Esophagus squamous epithelium (tissue), 5 donors: ENCODE measurements at regions of chr3 and their contacts with region 1.

Region 1: GRCh38 chr3:100254168-100254777 is 6.5 kb upstream of the TBC1D23 start:
- DNase-seq: no peak
- H3K4me3 ChIP-seq: no peak overlapping the region
- H3K27ac ChIP-seq: peak overlapping the region in 1 of 4 donors; percentile 22
- H3K4me1 ChIP-seq: peaks cover 0 to 11% (median 3%) of the 10 kb centered on the region in 3 donors
- H3K27me3 ChIP-seq: no peaks in the 10 kb centered on the region
- CTCF ChIP-seq: peak; percentile 44 to 72 (median 67)
- POLR2A ChIP-seq: no peak

Region 2: DNA sequence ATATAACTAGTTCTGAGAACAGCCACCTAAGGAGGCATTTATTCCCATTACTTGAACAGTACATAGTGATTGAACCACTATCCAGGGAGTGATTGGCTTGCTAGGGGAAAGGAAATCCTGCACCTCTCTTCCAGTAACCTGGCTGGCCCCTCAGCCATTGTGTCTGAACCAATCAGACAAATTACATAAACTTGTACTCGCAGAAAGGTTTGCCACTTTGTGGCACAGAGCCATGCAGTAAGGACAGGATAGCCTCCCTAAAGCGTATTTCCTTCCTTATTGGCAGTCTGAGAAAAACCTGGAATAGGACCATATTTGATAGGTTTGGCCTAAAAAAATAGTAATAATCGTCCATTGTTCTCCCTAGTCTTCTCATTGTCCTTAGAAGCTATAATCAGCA is 417.6 kb before region 1 on chr3:
- intact Hi-C with region 1: loop called (anchors 5 kb)
- DNase-seq: no peak
- H3K4me3 ChIP-seq: no peak overlapping the region
- H3K27ac ChIP-seq: no peak overlapping the region
- H3K4me1 ChIP-seq: peaks cover 0 to 34% (median 0%) of the 10 kb centered on the region in 3 donors
- H3K27me3 ChIP-seq: no peaks in the 10 kb centered on the region
- CTCF ChIP-seq: no peak
- POLR2A ChIP-seq: no peak

Region 3: DNA sequence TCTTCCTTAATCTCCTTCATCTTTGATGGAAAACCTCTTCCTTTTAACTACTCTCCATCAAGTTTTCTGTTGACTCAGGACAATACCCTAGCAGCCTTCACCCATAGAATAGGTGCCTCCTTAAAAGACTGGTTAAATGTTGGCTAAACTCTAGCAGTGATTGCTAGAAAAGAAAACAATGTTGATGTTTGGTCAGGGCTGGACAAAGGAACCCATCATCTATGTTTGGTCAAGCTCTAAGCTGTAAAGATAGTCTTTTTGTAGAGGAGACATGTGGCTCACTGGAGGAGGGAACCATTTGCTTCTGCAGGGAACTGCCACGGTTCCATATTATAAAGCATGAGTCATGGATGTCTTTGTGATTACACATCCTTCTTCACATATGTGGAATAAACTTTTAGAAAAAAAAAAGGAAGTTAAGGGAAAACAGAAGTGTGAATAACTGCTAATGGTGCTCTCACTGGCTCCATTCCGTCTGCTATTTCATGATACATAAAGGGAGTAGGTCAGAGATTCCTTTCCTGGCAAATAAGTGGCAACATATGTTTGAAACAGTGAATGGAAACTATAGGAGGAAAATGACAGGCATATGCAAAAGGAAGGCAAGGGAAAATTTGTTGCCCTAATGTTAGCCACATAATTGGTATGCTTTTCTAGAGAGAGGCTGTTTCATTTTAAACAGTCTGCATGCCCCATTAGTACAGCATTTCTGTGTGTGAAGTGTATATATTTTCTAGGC is 358.4 kb before region 1 on chr3:
- intact Hi-C with region 1: no loop called
- DNase-seq: no peak
- H3K4me3 ChIP-seq: no peak overlapping the region
- H3K27ac ChIP-seq: peak overlapping the region in 1 of 4 donors; percentile 2
- H3K4me1 ChIP-seq: peaks cover 2 to 8% (median 5%) of the 10 kb centered on the region in 3 donors
- H3K27me3 ChIP-seq: no peaks in the 10 kb centered on the region
- CTCF ChIP-seq: no peak
- POLR2A ChIP-seq: no peak

Region 4: DNA sequence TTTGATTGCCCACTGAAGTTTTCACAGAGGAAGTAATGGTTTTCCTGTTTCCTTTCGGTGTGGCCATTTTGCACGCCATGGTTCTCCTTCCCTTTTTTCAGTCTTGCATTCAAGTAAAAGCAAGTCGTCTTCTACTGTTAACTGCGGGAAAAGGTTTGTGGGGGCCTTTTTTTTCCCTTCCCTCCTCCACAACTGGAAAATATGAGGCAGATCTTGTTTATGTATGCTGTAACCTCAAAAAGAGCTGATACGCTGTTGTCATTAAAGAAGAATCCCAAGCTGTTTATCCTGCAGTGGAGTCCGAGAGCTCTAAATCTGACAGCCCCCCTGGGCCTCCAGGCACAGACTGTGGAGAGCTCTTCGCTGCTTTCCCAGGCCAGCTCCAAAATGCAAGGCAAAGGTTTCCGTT is 180.4 kb before region 1 on chr3:
- intact Hi-C with region 1: loop called (anchors 10 kb)
- DNase-seq: no peak
- H3K4me3 ChIP-seq: peak overlapping the region in 1 of 4 donors; percentile 7
- H3K27ac ChIP-seq: peak overlapping the region; percentile 26 to 81 (median 69)
- H3K4me1 ChIP-seq: peaks cover 7 to 50% (median 19%) of the 10 kb centered on the region in 3 donors
- H3K27me3 ChIP-seq: no peaks in the 10 kb centered on the region
- CTCF ChIP-seq: no peak
- POLR2A ChIP-seq: no peak